Calu3 (cell line): ENCODE measurements at regions of chr4 and their contacts with region 1.

Region 1: DNA sequence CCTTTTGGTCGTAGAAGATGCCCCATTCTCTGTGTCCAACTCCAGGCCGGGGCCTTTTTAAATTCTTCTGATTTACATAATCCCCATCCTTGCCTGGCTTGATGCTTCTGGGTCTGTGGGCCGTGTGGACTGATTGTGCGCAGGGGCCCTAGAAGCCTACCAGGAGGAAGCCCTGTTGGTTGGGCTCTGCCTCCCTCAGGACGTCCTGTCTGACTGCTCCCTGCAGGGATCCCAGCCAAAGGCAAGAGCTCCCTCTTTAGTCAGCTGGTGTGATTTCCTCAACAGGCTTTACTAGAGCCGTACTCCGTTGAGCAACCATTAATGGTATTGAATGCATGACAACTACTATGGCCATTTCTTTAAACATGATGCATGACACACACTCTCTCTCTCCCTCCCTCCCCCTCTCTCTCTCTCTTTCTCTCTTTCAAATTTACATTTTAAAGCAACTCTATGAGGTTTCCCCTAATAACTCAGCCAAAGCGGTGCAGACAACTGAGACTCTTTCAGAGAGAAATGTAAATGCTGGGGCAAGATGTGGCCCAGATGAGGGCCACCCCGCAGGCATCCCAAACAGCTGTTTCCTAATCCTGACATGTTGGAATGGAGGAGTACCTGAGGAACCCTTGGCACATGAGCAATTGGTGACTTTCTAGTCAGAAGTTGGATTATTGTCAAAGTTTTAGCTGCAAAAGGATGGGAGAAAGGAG is 117.3 kb downstream of the DRD5 start:
- DNase-seq: peak; percentile 18
- H3K4me3 Mint-ChIP-seq: no peak overlapping the region
- H3K27ac Mint-ChIP-seq: no peak overlapping the region
- H3K4me1 Mint-ChIP-seq: no peaks in the 10 kb centered on the region
- H3K27me3 Mint-ChIP-seq: peaks cover 27% of the 10 kb centered on the region
- CTCF ChIP-seq: no peak

Region 2: DNA sequence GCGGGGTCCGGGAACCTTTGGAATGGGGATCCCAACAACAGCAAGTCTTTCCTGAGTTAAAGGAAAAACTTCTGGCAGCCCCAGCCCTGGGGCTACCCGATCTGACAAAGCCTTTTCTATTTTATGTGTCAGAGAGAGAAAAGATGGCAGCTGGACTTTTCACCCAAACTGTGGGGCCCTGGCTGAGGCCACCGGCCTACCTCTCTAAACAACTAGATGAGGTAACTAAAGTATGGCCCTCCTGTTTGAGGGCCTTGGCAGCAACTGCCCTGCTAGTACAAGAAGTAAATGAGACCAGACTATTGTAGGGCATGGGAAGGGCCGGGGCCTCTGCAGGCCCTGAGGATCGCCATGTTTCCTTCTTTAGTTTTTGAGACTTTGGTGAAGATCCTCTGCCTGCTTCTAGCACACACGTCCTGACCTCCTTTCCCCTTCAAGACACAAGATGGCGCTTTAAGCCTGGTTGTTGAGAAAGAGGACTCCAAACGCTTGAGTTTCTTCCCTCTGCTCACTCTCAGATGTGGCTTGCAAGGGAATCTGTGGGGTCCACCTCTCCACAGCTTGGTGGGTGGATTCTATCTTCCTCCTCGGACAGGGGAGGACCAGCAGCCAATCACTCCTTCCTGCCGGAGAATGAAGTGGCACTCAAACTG is 135.8 kb before region 1 on chr4:
- CTCF ChIA-PET with region 1: no interaction called
- intact Hi-C with region 1: loop called (anchors 5 kb)
- DNase-seq: peak; percentile 47
- H3K4me3 Mint-ChIP-seq: no peak overlapping the region
- H3K27ac Mint-ChIP-seq: no peak overlapping the region
- H3K4me1 Mint-ChIP-seq: no peaks in the 10 kb centered on the region
- H3K27me3 Mint-ChIP-seq: peaks cover 28% of the 10 kb centered on the region
- CTCF ChIP-seq: peak; percentile 14

Region 3: GRCh38 chr4:10006601-10007435 is 108.1 kb after region 1 on chr4:
- CTCF ChIA-PET with region 1: no interaction called
- intact Hi-C with region 1: loop called (anchors 1 kb)
- DNase-seq: peak; percentile 68
- H3K4me3 Mint-ChIP-seq: peak overlapping the region; percentile 36
- H3K27ac Mint-ChIP-seq: peak overlapping the region; percentile 81
- H3K4me1 Mint-ChIP-seq: peaks cover 23% of the 10 kb centered on the region
- H3K27me3 Mint-ChIP-seq: no peaks in the 10 kb centered on the region
- CTCF ChIP-seq: no peak